Sigmoid colon (tissue), 7 donors: ENCODE measurements at regions of chr14 and their contacts with region 1.

Region 1: GRCh38 chr14:92603309-92604242 is 90.0 kb downstream of the RIN3 start:
- DNase-seq: peak; percentile 93
- H3K4me3 ChIP-seq: no peak overlapping the region
- H3K27ac ChIP-seq: peak overlapping the region; percentile 83 to 95 (median 88)
- H3K4me1 ChIP-seq: peaks cover 0 to 80% (median 62%) of the 10 kb centered on the region in 4 donors
- H3K27me3 ChIP-seq: no peaks in the 10 kb centered on the region
- CTCF ChIP-seq: peak in 3 of 4 experiments; percentile 9 to 17 (median 11)
- EP300 ChIP-seq: peak in 1 of 4 donors; percentile 38
- POLR2A ChIP-seq: no peak

Region 2: DNA sequence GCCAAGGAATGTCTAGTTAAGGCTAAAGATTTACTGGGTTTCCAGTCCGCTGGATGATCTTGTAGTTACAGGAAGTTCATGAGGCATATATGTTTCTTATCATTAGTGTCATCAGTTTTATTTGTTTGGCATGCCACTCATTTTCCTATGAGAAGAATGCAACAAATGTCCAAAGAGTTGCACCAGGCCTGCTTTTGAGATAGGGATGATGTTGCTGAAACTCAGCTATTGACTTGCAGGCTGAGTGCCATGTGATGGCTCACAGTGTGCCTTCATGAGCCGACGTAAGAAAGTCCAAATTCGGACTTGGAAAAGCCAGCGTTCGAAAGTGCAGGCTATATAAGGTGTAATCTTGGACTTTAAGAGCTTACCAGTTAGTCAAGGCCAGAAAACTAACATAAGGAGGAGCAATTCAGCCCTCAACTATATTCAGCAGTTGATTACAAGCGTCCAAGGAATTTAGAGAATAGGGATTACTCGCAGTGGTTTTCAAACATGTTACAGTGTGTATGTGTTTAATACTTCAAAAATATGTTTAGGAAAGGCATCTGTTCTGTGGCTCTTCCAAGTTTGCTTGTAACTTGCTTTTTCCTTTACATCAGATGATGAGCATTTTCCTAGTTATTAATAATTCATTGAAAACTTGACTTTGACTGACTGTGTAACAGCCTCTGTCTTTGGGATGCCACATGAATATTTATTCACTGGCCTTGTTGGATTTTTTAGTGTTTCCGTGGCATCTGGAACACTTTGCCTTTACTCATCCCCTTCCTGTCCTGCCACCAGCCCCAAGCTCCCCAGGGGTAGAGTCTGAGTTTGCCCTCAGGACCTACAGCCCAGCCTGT is 43.6 kb after region 1 on chr14:
- intact Hi-C with region 1: loop called (anchors 2 kb)
- DNase-seq: peak; percentile 94
- H3K4me3 ChIP-seq: no peak overlapping the region
- H3K27ac ChIP-seq: peak overlapping the region; percentile 81 to 99 (median 97)
- H3K4me1 ChIP-seq: peaks cover 0 to 80% (median 70%) of the 10 kb centered on the region in 4 donors
- H3K27me3 ChIP-seq: no peaks in the 10 kb centered on the region
- CTCF ChIP-seq: no peak
- EP300 ChIP-seq: peak; percentile 94 to 98 (median 96)
- POLR2A ChIP-seq: no peak